ENCODE measurements at regions of chr1 and their contacts with region 1.

Region 1: GRCh38 chr1:8560611-8561544 is 243.0 kb downstream of the SLC45A1 start:
- DNase-seq: peak in 2 of 10 donors; percentile 37
- H3K4me3 ChIP-seq: no peak overlapping the region
- H3K27ac ChIP-seq: peak overlapping the region in 16 of 59 donors; percentile 13 to 60 (median 28)
- H3K27me3 ChIP-seq: no peaks in the 10 kb centered on the region
- CTCF ChIP-seq: peak; percentile 90 to 99 (median 96)

Region 2: GRCh38 chr1:8314346-8315280 is 246.3 kb before region 1 on chr1:
- intact Hi-C with region 1: no loop called
- DNase-seq: peak; percentile 42 to 88 (median 76)
- H3K4me3 ChIP-seq: peak overlapping the region in 3 of 59 donors; percentile 4 to 13 (median 10)
- H3K27ac ChIP-seq: peak overlapping the region in 1 of 59 donors; percentile 30
- H3K27me3 ChIP-seq: no peaks in the 10 kb centered on the region
- CTCF ChIP-seq: peak; percentile 34 to 94 (median 80)

Region 3: GRCh38 chr1:8671306-8671917 is 110.5 kb after region 1 on chr1:
- intact Hi-C with region 1: loop called (anchors 2 to 5 kb)
- DNase-seq: peak in 2 of 10 donors; percentile 29 to 67
- H3K4me3 ChIP-seq: peak overlapping the region in 13 of 59 donors; percentile 13 to 34 (median 25)
- H3K27ac ChIP-seq: peak overlapping the region in 16 of 59 donors; percentile 2 to 52 (median 36)
- H3K27me3 ChIP-seq: no peaks in the 10 kb centered on the region
- CTCF ChIP-seq: peak; percentile 67 to 96 (median 86)

Region 4: GRCh38 chr1:8727809-8728213 is 166.9 kb after region 1 on chr1:
- intact Hi-C with region 1: loop called (anchors 2 to 5 kb)
- DNase-seq: peak in 4 of 10 donors; percentile 38 to 53 (median 46)
- H3K4me3 ChIP-seq: no peak overlapping the region
- H3K27ac ChIP-seq: peak overlapping the region in 38 of 59 donors; percentile 1 to 63 (median 38)
- H3K27me3 ChIP-seq: no peaks in the 10 kb centered on the region
- CTCF ChIP-seq: peak in 2 of 56 donors; percentile 4 to 5

Region 5: DNA sequence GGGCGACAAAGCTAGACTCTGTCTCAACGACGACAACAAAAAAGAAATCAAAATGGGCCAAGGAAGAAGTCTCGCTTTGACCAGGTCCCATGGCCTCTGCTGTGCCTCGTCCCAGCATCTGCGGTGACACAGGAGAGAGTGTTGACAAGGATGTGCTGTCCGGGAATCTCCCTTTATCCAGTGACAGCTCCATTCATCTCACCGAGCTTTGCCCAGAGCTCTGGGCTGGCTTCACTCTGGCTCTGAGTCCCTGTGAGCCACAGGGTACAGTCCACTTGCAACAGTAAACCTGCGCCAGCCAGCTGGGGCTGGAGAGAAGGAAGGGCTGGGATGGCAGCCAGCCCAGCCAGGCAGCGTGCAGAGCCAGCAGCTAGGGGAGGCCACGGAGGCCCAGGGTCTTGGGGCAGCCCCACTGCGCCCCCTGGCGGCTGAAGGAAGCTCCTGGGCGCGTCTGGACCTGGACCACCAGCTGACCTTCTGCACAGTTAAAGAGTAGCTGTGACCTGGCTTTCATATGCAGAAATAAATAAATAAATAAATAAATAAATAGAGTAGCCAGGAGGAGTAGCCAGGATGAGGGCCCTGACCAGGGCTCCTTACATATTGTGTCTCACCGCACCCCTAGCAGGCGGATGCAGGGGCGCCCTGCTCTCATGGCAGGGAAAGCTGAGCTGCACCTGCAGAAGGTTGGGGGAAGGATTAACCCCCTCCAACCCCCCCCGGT is 287.9 kb after region 1 on chr1:
- intact Hi-C with region 1: loop called (anchors 2 to 10 kb)
- DNase-seq: peak; percentile 79 to 91 (median 88)
- H3K4me3 ChIP-seq: peak overlapping the region in 32 of 59 donors; percentile 5 to 50 (median 27)
- H3K27ac ChIP-seq: peak overlapping the region in 54 of 59 donors; percentile 4 to 88 (median 68)
- H3K27me3 ChIP-seq: no peaks in the 10 kb centered on the region
- CTCF ChIP-seq: peak; percentile 81 to 99 (median 94)

Measured in dorsolateral prefrontal cortex (tissue), 120 donors.